ENCODE measurements at regions of chr1 and their contacts with region 1.

Region 1: DNA sequence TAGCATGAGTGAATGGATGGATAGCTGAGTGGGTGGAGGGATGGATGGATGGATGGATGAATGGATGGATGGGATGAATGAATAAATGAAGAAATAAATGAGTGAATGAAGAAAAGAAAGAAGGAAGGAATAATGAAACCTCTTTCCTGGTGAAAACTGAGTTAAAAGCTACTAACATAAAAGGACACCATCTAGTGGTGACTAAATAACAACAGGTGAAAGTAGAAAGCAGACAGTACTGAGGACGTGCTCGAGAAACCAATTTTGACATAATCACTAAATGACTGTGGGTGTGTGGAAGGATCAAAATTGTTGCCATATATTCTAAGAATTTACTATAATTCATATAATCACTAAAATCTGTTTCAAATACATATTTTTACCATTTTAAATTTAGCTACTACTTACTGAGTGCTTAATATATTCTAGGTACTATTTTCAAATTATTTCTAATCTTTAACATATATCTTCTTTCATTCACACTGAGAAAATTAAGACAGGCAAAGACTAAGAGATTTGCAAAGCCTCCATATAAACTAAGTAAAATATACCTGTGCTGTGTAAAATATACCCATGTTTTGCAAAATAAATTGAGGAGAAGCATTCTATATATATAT is 522.9 kb downstream of the LRRIQ3 start:
- DNase-seq: no peak
- H3K4me3 ChIP-seq: peak overlapping the region in 1 of 59 donors; percentile 2
- H3K27ac ChIP-seq: no peak overlapping the region
- H3K27me3 ChIP-seq: no peaks in the 10 kb centered on the region
- CTCF ChIP-seq: peak; percentile 38 to 72 (median 58)

Region 2: DNA sequence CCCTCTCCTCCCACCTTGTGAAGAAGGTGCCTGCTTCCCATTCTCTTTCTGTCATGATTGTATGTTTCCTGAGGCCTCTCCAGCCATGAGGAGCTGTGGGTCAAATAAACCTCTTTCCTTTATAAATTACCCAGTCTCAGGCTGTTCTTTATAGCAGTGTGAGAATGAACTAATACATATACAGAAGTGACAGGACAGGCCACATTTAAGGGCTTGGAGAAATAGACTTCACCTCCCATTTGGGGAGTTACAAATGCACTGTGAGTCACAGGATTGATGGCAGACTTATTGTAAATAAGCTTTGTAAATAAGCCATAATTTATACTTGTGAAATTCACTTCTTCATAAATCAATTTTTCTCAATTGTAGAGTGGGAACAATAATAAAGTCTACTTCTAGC is 20.3 kb before region 1 on chr1:
- intact Hi-C with region 1: no loop called
- DNase-seq: no peak
- H3K4me3 ChIP-seq: no peak overlapping the region
- H3K27ac ChIP-seq: no peak overlapping the region
- H3K27me3 ChIP-seq: no peaks in the 10 kb centered on the region
- CTCF ChIP-seq: no peak

Region 3: GRCh38 chr1:73998348-73998959 is 323.4 kb after region 1 on chr1:
- intact Hi-C with region 1: loop called in 1 of 2 experiments (anchors 10 kb)
- DNase-seq: no peak
- H3K4me3 ChIP-seq: no peak overlapping the region
- H3K27ac ChIP-seq: no peak overlapping the region
- H3K27me3 ChIP-seq: peaks cover 0 to 5% (median 0%) of the 10 kb centered on the region in 45 donors
- CTCF ChIP-seq: peak in 54 of 56 donors; percentile 50 to 85 (median 68)

Measured in dorsolateral prefrontal cortex (tissue), 120 donors.